Pancreas (tissue), 10 donors: ENCODE measurements at regions of chr16 and their contacts with region 1.

Region 1: GRCh38 chr16:14285513-14286385 is 214.6 kb downstream of the MRTFB start:
- DNase-seq: peak; percentile 86 to 100 (median 96)
- ATAC-seq: peak; percentile 89 to 94 (median 90)
- H3K4me3 ChIP-seq: peak overlapping the region; percentile 69 to 85 (median 75)
- H3K27ac ChIP-seq: peak overlapping the region; percentile 52 to 86 (median 74)
- H3K4me1 ChIP-seq: no peaks in the 10 kb centered on the region
- H3K27me3 ChIP-seq: no peaks in the 10 kb centered on the region
- CTCF ChIP-seq: no peak

Region 2: GRCh38 chr16:14539631-14540030 is 253.9 kb after region 1 on chr16:
- intact Hi-C with region 1: loop called in 1 of 3 experiments (anchors 10 kb)
- DNase-seq: no peak
- ATAC-seq: no peak
- H3K4me3 ChIP-seq: no peak overlapping the region
- H3K27ac ChIP-seq: no peak overlapping the region
- H3K4me1 ChIP-seq: peaks cover 0 to 2% (median 0%) of the 10 kb centered on the region in 3 donors
- H3K27me3 ChIP-seq: no peaks in the 10 kb centered on the region
- CTCF ChIP-seq: no peak